RWPE1 (cell line): ENCODE measurements at regions of chr7 and their contacts with region 1.

Region 1: DNA sequence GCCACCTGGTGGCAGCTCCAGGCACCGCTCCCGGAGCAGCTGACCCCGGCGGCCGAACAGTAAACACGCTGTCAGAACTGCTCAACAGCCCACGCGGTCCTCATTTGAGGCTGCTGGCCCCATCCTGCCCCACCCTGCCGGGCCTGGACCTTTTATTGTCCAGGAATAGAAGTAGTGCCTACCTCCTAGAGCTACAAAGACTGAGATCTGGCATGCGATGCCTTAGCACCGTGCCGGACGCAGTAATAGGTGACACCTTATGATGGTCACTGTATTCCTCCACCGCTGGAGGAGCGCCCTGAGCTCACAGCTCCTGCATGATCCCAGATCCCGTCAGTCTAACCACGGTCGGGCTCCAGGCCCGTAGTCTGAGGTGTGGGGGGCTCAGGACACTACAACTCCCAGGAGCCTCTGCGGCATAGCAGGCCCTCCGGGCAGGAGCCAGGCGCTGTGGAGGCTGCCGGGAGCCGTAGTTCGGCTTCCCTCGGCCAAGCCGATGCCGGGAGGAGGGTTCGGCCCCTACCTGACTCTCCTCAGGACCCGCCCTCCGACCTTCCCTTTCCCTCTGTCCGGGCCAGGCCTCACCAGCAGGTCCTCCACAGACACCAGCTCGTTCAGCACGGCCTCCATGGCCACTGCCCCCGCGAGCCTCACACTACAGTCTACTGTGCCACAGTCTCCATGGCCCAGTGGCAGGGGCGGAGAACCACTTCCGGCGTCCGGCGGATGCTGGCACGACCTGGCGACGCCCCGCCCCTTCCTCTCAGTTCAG is at the start of gene FIS1:
- DNase-seq: peak; percentile 85
- H3K27ac ChIP-seq: peak within 1 kb of the TSS; percentile 90
- CTCF ChIP-seq: peak; percentile 98

Region 2: GRCh38 chr7:101217388-101218235 is 26.9 kb before region 1 on chr7 and contains the starts of genes PLOD3 and ZNHIT1:
- CTCF ChIA-PET with region 1: interaction called, 20 read pairs
- POLR2A ChIA-PET with region 1: interaction called, 6 read pairs
- DNase-seq: peak; percentile 98
- H3K27ac ChIP-seq: peak within 1 kb of the TSS; percentile 97
- CTCF ChIP-seq: no peak; the same call in 1 of the 2 replicates

Region 3: GRCh38 chr7:101402088-101402779 is 157.7 kb after region 1 on chr7:
- CTCF ChIA-PET with region 1: no interaction called
- POLR2A ChIA-PET with region 1: no interaction called
- DNase-seq: peak; percentile 60
- H3K27ac ChIP-seq: peak overlapping the region; percentile 68
- CTCF ChIP-seq: no peak

Region 4: DNA sequence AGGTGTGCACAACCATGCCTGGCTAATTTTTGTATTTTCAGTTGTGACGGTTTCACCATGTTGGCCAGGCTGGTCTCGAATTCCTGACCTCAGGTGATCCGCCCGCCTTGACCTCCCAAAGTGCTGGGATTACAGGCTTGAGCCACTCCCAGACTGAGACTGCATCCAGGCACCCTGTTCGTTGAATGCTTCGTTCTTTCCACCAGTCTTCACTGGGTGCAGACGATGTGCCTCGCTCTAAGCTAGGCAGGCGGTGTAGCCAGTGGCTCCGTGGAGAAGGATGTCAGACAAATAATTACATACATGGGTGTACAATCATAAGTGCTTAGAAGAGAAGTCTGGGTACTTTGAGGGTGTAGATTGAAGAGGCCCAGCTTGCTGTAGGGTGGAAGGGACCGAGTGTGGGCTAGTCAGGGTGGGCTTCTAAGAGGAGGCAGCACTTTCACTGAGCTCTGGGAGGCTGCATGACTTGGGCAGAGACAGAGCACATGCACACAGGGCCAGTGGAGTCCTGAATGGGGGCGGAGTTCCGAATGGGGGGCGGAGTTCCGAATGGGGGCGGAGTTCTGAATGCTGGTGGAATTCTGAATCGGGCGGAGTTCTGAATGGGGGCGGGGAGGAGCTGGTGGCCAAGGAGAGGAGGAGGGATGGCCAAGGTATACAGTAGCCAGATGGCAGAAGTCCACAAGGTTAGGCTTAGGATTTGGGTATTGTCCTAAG is 192.5 kb after region 1 on chr7:
- CTCF ChIA-PET with region 1: no interaction called
- POLR2A ChIA-PET with region 1: no interaction called
- DNase-seq: peak; percentile 35
- H3K27ac ChIP-seq: no peak overlapping the region
- CTCF ChIP-seq: no peak